MCF 10A (cell line): ENCODE measurements at regions of chr19 and their contacts with region 1.

Region 1: DNA sequence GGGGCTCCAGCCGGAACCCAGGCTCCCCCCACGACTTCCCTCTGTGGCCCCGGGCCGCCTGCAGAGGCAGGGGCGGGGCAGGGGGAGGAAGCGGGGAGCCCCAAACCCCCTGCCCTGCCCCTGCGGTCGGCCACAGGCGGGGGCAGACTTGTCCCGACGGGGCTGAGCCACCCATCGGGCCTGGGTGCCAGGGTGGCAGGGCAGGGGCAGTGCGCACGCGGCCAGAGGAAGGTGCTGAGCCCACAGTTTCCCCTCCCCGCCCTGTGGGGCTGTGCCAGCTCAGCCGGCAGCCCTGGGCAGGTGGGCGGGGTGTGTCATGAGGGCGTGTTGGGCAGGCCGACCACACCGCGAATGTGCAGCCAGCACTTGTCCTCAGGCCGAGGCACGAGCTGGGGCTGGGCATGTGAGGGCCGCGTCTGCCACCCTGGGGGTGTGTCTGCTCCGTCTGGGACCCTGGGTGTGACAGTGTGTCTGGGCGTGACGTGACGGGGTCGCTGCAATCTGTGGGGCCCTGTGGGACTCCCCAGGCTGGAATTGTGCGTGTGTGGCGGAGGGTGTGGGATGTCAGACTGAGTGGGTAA is 17.7 kb downstream of the CCDC97 start:
- DNase-seq: peak; percentile 92
- H3K4me3 Mint-ChIP-seq: peak overlapping the region; percentile 71
- H3K27ac Mint-ChIP-seq: peak overlapping the region; percentile 41
- H3K4me1 Mint-ChIP-seq: peaks cover 54% of the 10 kb centered on the region
- H3K27me3 Mint-ChIP-seq: no peaks in the 10 kb centered on the region
- CTCF ChIP-seq: no peak

Region 2: GRCh38 chr19:41353466-41354342 is 26.0 kb after region 1 on chr19 and contains the start of gene TGFB1:
- CTCF ChIA-PET with region 1: interaction called, 8 read pairs
- POLR2A ChIA-PET with region 1: interaction called, 20 read pairs
- intact Hi-C with region 1: loop called (anchors 2 kb)
- DNase-seq: peak; percentile 84
- H3K4me3 Mint-ChIP-seq: peak within 1 kb of the TSS; percentile 98
- H3K27ac Mint-ChIP-seq: no peak within 1 kb of the TSS
- H3K4me1 Mint-ChIP-seq: peaks cover 24% of the 10 kb centered on the region
- H3K27me3 Mint-ChIP-seq: no peaks in the 10 kb centered on the region
- CTCF ChIP-seq: peak; percentile 92
- total RNA-seq, gene TGFB1: 27.8 and 33.7 TPM in 2 replicates